ENCODE measurements at regions of chr3 and their contacts with region 1.

Region 1: GRCh38 chr3:14651440-14652251 is at the start of gene CCDC174:
- DNase-seq: peak; percentile 89 to 100 (median 93)
- ATAC-seq: peak; percentile 97
- H3K4me3 ChIP-seq: peak within 1 kb of the TSS; percentile 74 to 85
- H3K4me3 Mint-ChIP-seq: peak within 1 kb of the TSS; percentile 98
- H3K27ac ChIP-seq: peak within 1 kb of the TSS; percentile 95 to 97
- H3K27ac Mint-ChIP-seq: peak within 1 kb of the TSS; percentile 99
- H3K4me1 ChIP-seq: peaks cover 31% of the 10 kb centered on the region
- H3K4me1 Mint-ChIP-seq: peaks cover 60% of the 10 kb centered on the region
- H3K27me3 ChIP-seq: no peaks in the 10 kb centered on the region
- H3K27me3 Mint-ChIP-seq: no peaks in the 10 kb centered on the region
- CTCF ChIP-seq: no peak
- total RNA-seq, gene CCDC174: 48.8 to 50.9 TPM

Region 2: DNA sequence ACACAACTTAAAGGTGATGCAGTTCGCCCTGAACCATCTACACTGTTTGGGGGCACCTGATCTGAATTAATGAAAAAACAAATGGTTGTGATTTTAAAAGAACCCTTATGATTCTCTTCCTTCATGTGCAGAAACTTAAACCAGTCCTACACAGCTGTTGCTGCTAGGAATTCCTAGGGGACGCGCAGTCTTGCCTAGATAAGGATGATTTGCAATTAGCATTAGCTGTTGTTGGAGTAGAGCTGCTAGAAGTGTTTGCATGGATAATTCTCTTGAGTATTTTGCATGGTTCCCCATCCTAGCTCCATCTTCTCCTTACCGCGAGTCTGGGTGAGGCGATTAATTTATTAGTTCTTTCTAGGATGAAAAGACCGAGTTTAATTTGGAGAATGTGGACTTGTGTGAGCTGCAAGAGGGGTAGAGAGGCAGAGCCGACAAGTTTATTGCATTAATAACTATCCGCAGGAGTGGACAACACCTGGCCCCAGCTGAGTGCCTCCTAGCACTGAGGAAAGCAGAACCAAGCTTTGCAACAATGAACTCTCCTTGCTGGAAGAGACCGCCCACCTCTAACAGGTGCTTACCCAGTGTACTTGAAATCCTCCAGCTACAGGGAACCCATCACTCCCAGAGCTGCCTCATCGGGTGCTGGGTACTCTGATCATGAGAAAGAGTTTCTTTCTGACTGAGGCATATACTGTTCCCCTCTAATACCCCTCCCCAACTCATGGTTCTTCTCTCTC is 696.7 kb before region 1 on chr3:
- CTCF ChIA-PET with region 1: no interaction called
- POLR2A ChIA-PET with region 1: no interaction called
- intact Hi-C with region 1: loop called in 1 of 2 experiments (anchors 5 kb)
- DNase-seq: no peak
- ATAC-seq: no peak
- H3K4me3 ChIP-seq: no peak overlapping the region
- H3K4me3 Mint-ChIP-seq: no peak overlapping the region
- H3K27ac ChIP-seq: no peak overlapping the region
- H3K27ac Mint-ChIP-seq: no peak overlapping the region
- H3K4me1 ChIP-seq: no peaks in the 10 kb centered on the region
- H3K4me1 Mint-ChIP-seq: peaks cover 1% of the 10 kb centered on the region
- H3K27me3 ChIP-seq: no peaks in the 10 kb centered on the region
- H3K27me3 Mint-ChIP-seq: peaks cover 8% of the 10 kb centered on the region
- CTCF ChIP-seq: no peak

Region 3: GRCh38 chr3:14431892-14432834 is 219.5 kb before region 1 on chr3:
- CTCF ChIA-PET with region 1: no interaction called
- POLR2A ChIA-PET with region 1: interaction called, 9 read pairs
- intact Hi-C with region 1: loop called in 1 of 2 experiments (anchors 1 kb)
- DNase-seq: peak; percentile 85 to 97 (median 95)
- ATAC-seq: peak; percentile 83
- H3K4me3 ChIP-seq: peak overlapping the region in 1 of 2 experiments; percentile 27
- H3K4me3 Mint-ChIP-seq: peak overlapping the region; percentile 75
- H3K27ac ChIP-seq: peak overlapping the region; percentile 66 to 95
- H3K27ac Mint-ChIP-seq: peak overlapping the region; percentile 99
- H3K4me1 ChIP-seq: peaks cover 75% of the 10 kb centered on the region
- H3K4me1 Mint-ChIP-seq: peaks cover 85% of the 10 kb centered on the region
- H3K27me3 ChIP-seq: no peaks in the 10 kb centered on the region
- H3K27me3 Mint-ChIP-seq: no peaks in the 10 kb centered on the region
- CTCF ChIP-seq: no peak

Region 4: GRCh38 chr3:14688525-14688924 is 36.9 kb after region 1 on chr3:
- CTCF ChIA-PET with region 1: no interaction called
- POLR2A ChIA-PET with region 1: no interaction called
- intact Hi-C with region 1: no loop called
- DNase-seq: no peak
- ATAC-seq: no peak
- H3K4me3 ChIP-seq: no peak overlapping the region
- H3K4me3 Mint-ChIP-seq: no peak overlapping the region
- H3K27ac ChIP-seq: no peak overlapping the region
- H3K27ac Mint-ChIP-seq: no peak overlapping the region
- H3K4me1 ChIP-seq: no peaks in the 10 kb centered on the region
- H3K4me1 Mint-ChIP-seq: no peaks in the 10 kb centered on the region
- H3K27me3 ChIP-seq: peaks cover 0 to 2% of the 10 kb centered on the region in 2 experiments
- H3K27me3 Mint-ChIP-seq: no peaks in the 10 kb centered on the region
- CTCF ChIP-seq: no peak

Region 5: DNA sequence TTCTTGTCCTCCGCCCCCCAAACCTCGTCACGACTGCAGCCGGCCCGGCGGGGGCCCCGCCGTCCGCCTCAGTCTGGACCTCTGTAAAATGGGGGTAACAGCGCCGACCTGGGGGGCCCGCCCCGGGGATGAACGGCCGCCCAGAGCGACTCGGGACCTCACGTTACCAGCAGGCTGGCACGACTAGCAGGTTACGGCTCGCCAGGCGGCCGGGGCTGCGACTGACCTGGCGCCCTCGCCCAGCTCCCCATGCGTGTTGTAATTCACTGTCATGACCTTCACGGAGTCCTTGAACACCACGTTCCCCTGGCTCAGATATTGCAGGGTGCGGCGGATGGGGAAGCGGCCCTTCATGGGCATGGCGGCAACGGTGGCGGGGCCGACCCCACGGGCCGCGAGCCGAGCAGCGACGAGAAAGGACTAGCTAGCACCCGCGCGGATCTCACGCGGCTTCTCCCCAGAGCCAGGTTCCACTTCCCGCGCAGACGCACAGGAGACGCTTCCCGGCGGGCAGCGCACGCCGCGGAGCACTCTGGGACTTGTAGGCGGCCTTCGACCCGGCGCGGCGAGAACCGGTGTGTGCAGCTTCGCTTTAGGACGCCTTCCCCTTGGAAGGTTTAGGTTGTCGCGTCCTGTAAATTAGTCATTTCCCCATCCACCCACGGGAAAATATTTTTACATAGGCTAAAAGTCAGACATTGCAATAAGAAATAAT is 413.3 kb after region 1 on chr3 and contains the start of gene MRPS25:
- CTCF ChIA-PET with region 1: no interaction called
- POLR2A ChIA-PET with region 1: no interaction called
- intact Hi-C with region 1: loop called (anchors 1 kb)
- DNase-seq: peak; percentile 75 to 94 (median 89)
- ATAC-seq: peak; percentile 98
- H3K4me3 ChIP-seq: peak within 1 kb of the TSS; percentile 89 to 96
- H3K4me3 Mint-ChIP-seq: peak within 1 kb of the TSS; percentile 98
- H3K27ac ChIP-seq: peak within 1 kb of the TSS; percentile 78 to 85
- H3K27ac Mint-ChIP-seq: peak within 1 kb of the TSS; percentile 97
- H3K4me1 ChIP-seq: peaks cover 17% of the 10 kb centered on the region
- H3K4me1 Mint-ChIP-seq: peaks cover 26% of the 10 kb centered on the region
- H3K27me3 ChIP-seq: no peaks in the 10 kb centered on the region
- H3K27me3 Mint-ChIP-seq: no peaks in the 10 kb centered on the region
- CTCF ChIP-seq: no peak
- total RNA-seq, gene MRPS25: 51.3 to 56.2 TPM

Region 6: DNA sequence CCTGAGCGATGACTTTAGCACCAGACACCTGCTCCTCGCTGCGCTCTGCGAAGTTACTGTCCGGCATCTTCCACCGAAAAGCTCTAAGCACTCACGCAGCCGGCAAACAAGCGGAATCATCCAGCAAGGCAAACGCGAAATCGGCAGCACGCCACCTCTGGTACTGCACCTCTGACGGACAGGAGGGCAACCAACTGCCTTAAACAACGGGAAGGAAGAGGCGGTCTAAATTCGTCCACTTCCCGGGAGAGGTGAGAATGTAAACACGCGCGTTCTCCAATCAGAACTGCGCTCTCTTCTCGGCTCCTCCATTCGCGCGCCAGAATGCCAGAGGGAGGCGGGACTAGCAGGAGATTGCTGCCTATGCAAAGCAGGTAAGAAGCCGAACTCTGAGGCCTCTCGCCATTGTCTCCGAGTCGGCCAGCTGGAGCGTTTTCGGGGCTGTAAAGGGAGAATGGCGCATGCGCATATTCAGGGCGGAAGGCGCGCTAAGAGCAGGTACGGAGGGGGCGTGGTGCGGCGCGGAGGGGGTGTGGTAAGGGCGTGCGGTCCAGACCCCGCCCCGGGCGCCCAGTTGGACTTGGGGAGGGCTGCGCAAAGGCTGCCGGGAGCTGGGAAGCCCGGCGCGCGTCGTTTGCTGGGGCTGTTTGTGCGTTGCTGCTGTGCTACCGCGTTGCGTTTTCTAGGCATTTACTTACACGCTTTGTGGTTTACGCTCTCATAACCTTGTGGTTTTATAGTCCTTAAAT is 949.9 kb after region 1 on chr3 and contains the starts of genes BTD and HACL1:
- CTCF ChIA-PET with region 1: no interaction called
- POLR2A ChIA-PET with region 1: interaction called, 5 read pairs
- intact Hi-C with region 1: loop called in 1 of 2 experiments (anchors 5 kb)
- DNase-seq: peak; percentile 96 to 100 (median 99)
- ATAC-seq: peak; percentile 89
- H3K4me3 ChIP-seq: peak within 1 kb of the TSS; percentile 82 to 94
- H3K4me3 Mint-ChIP-seq: peak within 1 kb of the TSS; percentile 100
- H3K27ac ChIP-seq: peak within 1 kb of the TSS; percentile 82 to 88
- H3K27ac Mint-ChIP-seq: peak within 1 kb of the TSS; percentile 99
- H3K4me1 ChIP-seq: peaks cover 19% of the 10 kb centered on the region
- H3K4me1 Mint-ChIP-seq: peaks cover 54% of the 10 kb centered on the region
- H3K27me3 ChIP-seq: no peaks in the 10 kb centered on the region
- H3K27me3 Mint-ChIP-seq: no peaks in the 10 kb centered on the region
- CTCF ChIP-seq: peak; percentile 24
- total RNA-seq, gene BTD: 9.1 to 11.3 TPM
- total RNA-seq, gene HACL1: 30.1 to 33.4 TPM

Measured in CD8-positive, alpha-beta T cell (primary cell).